Prostate gland (tissue), 2 donors: ENCODE measurements at regions of chr22 and their contacts with region 1.

Region 1: DNA sequence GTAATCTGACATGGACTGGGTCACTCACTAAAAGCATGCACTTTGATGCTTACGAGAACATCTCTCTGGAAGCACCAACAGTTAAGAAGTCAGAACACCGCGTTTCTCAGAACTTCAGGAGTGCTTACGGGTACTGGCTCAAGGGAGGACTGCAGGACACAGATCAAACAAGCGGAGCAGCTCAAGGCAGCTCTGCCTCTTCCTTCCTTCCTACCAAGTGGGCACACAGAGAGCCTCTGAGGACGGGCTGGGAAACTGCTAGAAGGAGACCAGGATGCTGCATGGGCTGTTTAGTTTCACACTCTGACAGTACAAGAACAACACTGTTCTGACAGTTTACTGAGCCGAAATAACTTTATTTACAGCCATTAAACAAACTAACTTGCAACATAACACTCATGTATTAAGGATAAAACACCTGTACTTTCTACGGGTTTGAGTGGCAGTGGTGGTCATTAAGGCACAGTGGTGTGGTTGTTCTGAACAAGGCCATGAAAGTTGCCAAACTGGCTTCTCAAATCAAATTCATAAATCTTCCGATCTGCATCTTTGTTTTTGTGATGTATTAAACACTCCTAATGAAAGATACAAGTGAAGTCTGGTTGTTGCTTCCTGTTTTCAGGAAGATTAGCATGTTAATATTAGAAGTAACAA is 37.5 kb downstream of the ARFGAP3 start:
- DNase-seq: no peak
- H3K4me3 ChIP-seq: no peak overlapping the region
- H3K27ac ChIP-seq: peak overlapping the region; percentile 73 to 83
- H3K4me1 ChIP-seq: peaks cover 13% of the 10 kb centered on the region
- H3K27me3 ChIP-seq: no peaks in the 10 kb centered on the region
- CTCF ChIP-seq: no peak
- POLR2A ChIP-seq: no peak

Region 2: DNA sequence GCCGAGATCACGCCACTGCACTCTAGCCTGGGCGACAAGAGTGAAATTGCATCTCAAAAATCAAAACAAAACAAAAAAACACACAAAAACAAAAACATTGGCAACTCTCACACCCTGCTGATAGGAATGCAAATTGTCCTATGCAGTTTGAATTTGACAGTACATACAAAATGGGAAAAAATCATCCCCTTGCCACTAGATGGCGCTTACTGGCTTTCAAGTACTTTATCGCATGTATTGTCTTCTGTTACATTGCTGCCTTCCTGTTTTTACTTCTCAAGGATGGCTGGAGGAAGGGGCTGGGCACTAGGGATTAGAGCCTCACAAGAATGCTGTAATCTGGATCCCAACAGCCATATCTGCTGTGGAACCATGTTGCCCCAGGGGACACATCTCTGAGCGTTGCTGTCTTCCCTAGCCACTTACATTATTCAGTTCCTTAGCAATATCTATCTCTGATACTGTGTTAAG is 39.4 kb before region 1 on chr22:
- intact Hi-C with region 1: loop called (anchors 5 kb)
- DNase-seq: peak; percentile 94
- H3K4me3 ChIP-seq: no peak overlapping the region
- H3K27ac ChIP-seq: peak overlapping the region in 1 of 2 donors; percentile 49
- H3K4me1 ChIP-seq: no peaks in the 10 kb centered on the region
- H3K27me3 ChIP-seq: no peaks in the 10 kb centered on the region
- CTCF ChIP-seq: peak; percentile 71 to 98 (median 92)
- POLR2A ChIP-seq: no peak